ENCODE measurements at regions of chr12 and their contacts with region 1.

Region 1: GRCh38 chr12:40921563-40922163 is 229.4 kb downstream of the CNTN1 start:
- DNase-seq: no peak
- H3K4me3 Mint-ChIP-seq: no peak overlapping the region
- H3K27ac Mint-ChIP-seq: no peak overlapping the region
- H3K4me1 Mint-ChIP-seq: peaks cover 8% of the 10 kb centered on the region
- H3K27me3 Mint-ChIP-seq: no peaks in the 10 kb centered on the region
- CTCF ChIP-seq: no peak

Region 2: GRCh38 chr12:40336573-40337199 is 585.0 kb before region 1 on chr12:
- CTCF ChIA-PET with region 1: no interaction called
- intact Hi-C with region 1: loop called (anchors 5 kb)
- DNase-seq: peak; percentile 1
- H3K4me3 Mint-ChIP-seq: no peak overlapping the region
- H3K27ac Mint-ChIP-seq: no peak overlapping the region
- H3K4me1 Mint-ChIP-seq: no peaks in the 10 kb centered on the region
- H3K27me3 Mint-ChIP-seq: no peaks in the 10 kb centered on the region
- CTCF ChIP-seq: peak; percentile 45

Region 3: DNA sequence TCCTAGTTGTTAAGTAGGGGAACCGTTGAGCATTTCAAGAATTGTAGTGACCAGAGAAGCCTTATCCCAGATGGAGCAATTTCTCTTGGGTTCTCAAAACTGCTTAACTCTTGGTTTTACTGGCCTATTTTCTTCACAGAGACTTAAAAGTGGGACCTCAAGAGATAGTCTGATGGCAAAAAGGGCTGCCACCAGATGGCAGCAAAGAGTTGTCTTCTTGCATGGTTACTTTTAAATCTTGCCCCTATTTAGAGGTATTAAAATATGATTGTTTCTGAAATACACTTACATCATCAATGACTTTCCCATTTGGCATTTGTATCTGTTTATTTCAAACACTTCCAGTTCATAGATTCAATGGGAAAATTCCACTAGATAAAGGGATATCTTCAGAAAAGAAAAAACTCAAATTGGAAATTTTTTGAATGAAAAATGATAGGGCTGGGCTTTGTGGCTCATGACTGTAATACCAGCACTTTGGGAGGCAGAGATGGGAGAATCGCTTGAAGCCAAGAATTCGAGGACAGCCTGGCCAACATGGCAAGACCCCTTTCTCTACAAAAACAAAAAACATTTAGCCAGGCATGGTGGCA is 299.3 kb before region 1 on chr12:
- CTCF ChIA-PET with region 1: no interaction called
- intact Hi-C with region 1: loop called (anchors 1 kb)
- DNase-seq: peak; percentile 49
- H3K4me3 Mint-ChIP-seq: no peak overlapping the region
- H3K27ac Mint-ChIP-seq: no peak overlapping the region
- H3K4me1 Mint-ChIP-seq: no peaks in the 10 kb centered on the region
- H3K27me3 Mint-ChIP-seq: no peaks in the 10 kb centered on the region
- CTCF ChIP-seq: no peak

Region 4: DNA sequence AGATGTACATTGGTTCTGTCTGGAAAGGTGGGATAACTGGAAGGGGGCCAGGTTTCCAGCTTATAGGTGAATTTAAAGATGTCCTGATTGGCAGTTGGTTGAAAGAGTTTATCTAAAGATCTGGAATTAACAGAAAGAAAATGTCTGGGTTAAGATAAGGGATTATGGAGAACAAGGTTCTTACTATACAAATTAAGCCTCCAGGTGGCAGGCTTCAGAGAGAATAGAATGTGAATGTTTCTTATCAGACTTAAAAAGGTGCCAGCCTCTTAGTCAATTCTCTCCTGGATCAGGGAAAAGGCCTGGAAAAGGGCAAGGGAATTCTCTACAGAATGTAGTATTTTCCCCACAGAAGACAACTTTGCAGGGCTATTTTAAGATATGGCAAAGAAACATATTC is 176.3 kb before region 1 on chr12:
- CTCF ChIA-PET with region 1: no interaction called
- intact Hi-C with region 1: loop called (anchors 1 kb)
- DNase-seq: peak; percentile 3
- H3K4me3 Mint-ChIP-seq: no peak overlapping the region
- H3K27ac Mint-ChIP-seq: no peak overlapping the region
- H3K4me1 Mint-ChIP-seq: peaks cover 8% of the 10 kb centered on the region
- H3K27me3 Mint-ChIP-seq: no peaks in the 10 kb centered on the region
- CTCF ChIP-seq: no peak

Region 5: GRCh38 chr12:40762072-40762471 is 159.6 kb before region 1 on chr12:
- CTCF ChIA-PET with region 1: no interaction called
- intact Hi-C with region 1: loop called (anchors 5 kb)
- DNase-seq: no peak
- H3K4me3 Mint-ChIP-seq: no peak overlapping the region
- H3K27ac Mint-ChIP-seq: no peak overlapping the region
- H3K4me1 Mint-ChIP-seq: no peaks in the 10 kb centered on the region
- H3K27me3 Mint-ChIP-seq: no peaks in the 10 kb centered on the region
- CTCF ChIP-seq: no peak

Region 6: DNA sequence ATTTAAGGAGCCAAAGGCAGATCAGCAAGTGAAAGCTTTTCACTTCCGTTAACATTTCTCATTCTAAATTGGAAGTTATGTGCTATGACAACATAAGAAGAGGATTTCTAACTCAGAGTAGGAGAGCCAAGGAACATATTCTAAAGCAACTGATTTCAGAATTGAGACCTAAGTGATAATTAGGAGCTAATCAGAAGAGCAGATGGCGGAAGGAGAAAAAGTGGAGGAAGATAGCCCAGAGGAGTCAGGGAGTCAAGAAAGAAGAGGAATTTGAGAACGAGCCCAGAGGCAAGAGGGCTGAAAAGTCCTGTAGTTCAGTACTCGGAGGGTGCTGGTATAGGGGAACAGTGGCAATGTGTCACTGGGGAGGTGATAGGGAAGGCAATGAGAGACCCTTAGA is 67.1 kb before region 1 on chr12:
- CTCF ChIA-PET with region 1: no interaction called
- intact Hi-C with region 1: loop called (anchors 5 kb)
- DNase-seq: no peak
- H3K4me3 Mint-ChIP-seq: no peak overlapping the region
- H3K27ac Mint-ChIP-seq: no peak overlapping the region
- H3K4me1 Mint-ChIP-seq: no peaks in the 10 kb centered on the region
- H3K27me3 Mint-ChIP-seq: no peaks in the 10 kb centered on the region
- CTCF ChIP-seq: no peak

Region 7: DNA sequence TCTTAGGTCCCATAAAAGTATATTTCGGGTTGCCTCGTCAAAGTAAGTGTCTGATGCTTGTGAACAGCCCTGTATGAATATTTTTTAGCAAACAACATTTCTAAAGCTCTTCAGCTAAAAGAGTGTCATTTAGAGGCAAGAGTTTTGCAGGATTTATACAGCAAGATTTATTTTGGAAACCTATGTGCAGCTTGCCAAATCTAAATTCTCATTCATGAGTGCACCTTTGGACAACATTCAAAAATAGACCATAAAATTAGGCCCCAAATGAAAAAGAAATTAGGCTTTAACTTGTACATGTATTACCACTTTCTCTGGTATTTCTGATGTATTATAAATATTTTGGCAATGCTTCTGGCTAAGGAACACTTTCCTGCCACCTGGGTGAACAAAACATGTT is 42.1 kb after region 1 on chr12:
- CTCF ChIA-PET with region 1: no interaction called
- intact Hi-C with region 1: no loop called
- DNase-seq: no peak
- H3K4me3 Mint-ChIP-seq: no peak overlapping the region
- H3K27ac Mint-ChIP-seq: no peak overlapping the region
- H3K4me1 Mint-ChIP-seq: no peaks in the 10 kb centered on the region
- H3K27me3 Mint-ChIP-seq: no peaks in the 10 kb centered on the region
- CTCF ChIP-seq: no peak